Common myeloid progenitor, CD34-positive (primary cell): ENCODE measurements at regions of chr2 and their contacts with region 1.

Region 1: DNA sequence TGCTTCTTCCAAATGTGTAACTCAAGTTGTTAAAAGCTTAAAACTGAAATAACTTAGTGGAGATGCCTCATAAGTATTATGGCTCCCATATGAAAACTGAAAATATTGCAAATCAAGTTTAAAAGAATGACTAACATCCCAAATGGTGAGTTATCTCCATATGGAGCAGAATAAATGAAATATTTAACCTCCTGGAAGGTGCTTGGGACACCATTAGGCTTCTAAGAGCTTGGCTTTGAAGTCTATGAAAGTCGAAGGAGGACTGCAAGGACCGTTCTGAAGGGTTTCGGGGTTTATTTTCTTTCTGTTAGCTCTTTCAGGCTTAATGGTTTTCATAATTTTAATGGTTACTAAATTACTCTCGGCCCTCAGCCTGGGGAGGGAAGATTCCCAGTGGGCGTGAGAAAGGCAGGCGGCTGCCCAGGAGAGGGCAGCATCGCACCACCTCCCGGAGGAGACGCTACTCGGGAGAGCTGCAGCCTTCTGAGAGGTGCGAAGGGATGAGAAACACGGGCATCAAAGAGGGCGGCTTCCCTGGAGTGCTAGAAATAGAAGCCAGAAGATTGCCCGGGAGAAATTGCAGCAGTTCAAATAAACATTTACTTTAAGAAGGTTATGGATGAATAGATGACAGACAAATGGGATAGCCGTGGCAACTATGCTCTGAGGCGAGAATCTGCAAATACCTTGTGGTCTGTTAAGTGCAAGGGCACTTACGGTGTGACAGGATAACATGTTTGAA is 43.1 kb downstream of the MAP3K19 start:
- DNase-seq: peak; percentile 62 to 74 (median 62)
- H3K4me3 ChIP-seq: no peak overlapping the region
- H3K27ac ChIP-seq: no peak overlapping the region
- H3K4me1 ChIP-seq: peaks cover 0 to 3% (median 0%) of the 10 kb centered on the region in 4 experiments
- H3K27me3 ChIP-seq: peaks cover 0 to 13% (median 6%) of the 10 kb centered on the region in 5 experiments

Region 2: DNA sequence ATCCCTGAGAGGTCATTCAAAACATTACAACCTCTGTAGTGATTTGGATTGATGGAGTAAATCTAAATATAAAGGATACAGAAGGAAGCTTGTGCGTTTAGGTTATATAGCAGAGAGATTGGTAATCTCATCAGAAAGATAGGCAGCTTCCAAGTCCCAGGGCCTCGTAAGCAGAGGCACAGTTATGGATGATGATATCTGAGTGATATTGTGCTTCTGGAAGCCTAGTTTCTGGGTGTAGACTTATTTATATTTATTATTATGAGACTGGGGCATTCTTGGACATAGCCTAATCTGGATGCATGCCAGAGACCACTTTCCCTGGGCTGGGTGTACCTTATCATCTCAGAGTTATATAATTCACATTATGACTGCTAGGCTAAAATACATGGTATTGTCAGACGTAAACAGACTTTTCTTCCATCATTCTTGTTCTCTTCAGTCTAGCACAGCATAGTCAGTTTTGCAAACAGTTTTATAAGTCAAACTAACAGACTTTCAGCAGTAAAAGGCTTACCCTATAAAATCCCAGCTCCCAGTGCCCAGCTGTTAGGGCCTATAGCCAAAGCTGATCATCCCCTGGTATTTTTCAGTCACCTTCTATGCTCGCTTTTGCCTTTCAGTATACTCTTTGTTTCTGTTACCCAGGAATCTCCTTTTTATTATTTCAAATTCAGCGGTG is 95.8 kb after region 1 on chr2:
- CTCF ChIA-PET with region 1: no interaction called
- POLR2A ChIA-PET with region 1: no interaction called
- DNase-seq: no peak
- H3K4me3 ChIP-seq: no peak overlapping the region
- H3K27ac ChIP-seq: no peak overlapping the region
- H3K4me1 ChIP-seq: no peaks in the 10 kb centered on the region
- H3K27me3 ChIP-seq: no peaks in the 10 kb centered on the region

Region 3: DNA sequence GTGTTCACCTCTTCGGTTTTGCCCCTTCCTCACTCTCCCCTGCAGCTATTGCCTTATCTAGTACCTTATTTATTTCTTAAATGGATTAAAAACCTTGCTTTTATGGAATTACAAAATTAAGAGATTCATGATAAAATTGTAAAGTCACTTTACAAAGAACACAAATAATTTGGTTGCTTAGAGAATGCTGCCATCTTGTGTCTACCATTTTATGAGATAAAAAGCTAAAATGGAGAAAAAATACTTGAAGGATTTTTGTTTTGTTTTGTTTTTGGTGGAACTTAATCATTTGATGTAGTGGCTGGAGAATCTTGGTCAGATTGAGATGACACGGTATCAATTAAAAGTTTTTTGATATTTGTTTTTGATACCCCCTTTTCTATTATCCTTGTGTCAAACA is 596.7 kb after region 1 on chr2:
- CTCF ChIA-PET with region 1: interaction called, 29 read pairs
- POLR2A ChIA-PET with region 1: no interaction called
- DNase-seq: peak; percentile 20 to 48 (median 43)
- H3K4me3 ChIP-seq: no peak overlapping the region
- H3K27ac ChIP-seq: no peak overlapping the region
- H3K4me1 ChIP-seq: no peaks in the 10 kb centered on the region
- H3K27me3 ChIP-seq: no peaks in the 10 kb centered on the region

Region 4: GRCh38 chr2:135709992-135710391 is 705.8 kb after region 1 on chr2:
- CTCF ChIA-PET with region 1: interaction called, 50 read pairs
- POLR2A ChIA-PET with region 1: no interaction called
- DNase-seq: peak; percentile 34 to 78 (median 67)
- H3K4me3 ChIP-seq: no peak overlapping the region
- H3K27ac ChIP-seq: no peak overlapping the region
- H3K4me1 ChIP-seq: no peaks in the 10 kb centered on the region
- H3K27me3 ChIP-seq: no peaks in the 10 kb centered on the region